ENCODE measurements at regions of chr16 and their contacts with region 1.

Region 1: DNA sequence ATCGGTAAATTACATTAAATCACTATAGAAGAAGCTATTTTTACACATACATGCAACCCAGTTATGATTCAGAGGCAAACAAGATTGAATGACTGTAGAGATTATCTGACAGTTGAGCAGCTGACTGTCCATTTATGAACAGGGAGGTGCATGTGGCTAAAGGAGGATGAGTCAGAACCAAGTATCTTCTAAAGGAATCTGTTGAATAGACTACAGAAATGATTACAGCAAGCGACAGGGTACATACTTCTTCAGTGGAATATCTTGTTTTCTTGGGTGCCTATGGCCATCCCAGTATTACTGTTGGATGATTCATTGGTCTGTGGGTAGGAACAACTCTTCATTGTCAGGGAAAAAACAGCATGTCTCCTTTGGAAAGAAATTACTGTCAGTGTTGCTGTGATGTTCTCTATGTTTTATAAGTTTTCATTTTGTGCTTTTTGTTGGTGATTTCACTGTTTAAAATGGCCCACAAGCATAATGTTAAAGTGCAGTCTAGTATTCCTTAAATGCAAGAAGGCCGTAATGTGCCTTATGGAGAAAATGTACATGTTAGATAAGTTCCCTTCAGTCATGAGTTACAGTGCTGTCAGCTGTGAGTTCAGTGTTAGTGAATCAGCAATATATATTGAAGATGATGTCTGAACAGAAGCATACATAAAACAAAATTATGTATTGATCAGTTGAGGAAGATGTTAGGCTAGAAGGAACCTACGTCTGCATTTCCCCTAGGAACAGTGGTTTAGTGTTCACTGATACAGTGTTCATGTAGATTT is 27.0 kb downstream of the CBFB start:
- DNase-seq: peak; percentile 34
- ATAC-seq: peak; percentile 89
- H3K4me3 Mint-ChIP-seq: peak overlapping the region; percentile 6
- H3K27ac Mint-ChIP-seq: peak overlapping the region; percentile 84
- H3K4me1 Mint-ChIP-seq: peaks cover 50% of the 10 kb centered on the region
- H3K27me3 Mint-ChIP-seq: no peaks in the 10 kb centered on the region

Region 2: GRCh38 chr16:66786551-66786950 is 269.3 kb before region 1 on chr16:
- CTCF ChIA-PET with region 1: no interaction called
- POLR2A ChIA-PET with region 1: no interaction called
- intact Hi-C with region 1: no loop called
- DNase-seq: no peak
- ATAC-seq: no peak
- H3K4me3 Mint-ChIP-seq: no peak overlapping the region
- H3K27ac Mint-ChIP-seq: no peak overlapping the region
- H3K4me1 Mint-ChIP-seq: no peaks in the 10 kb centered on the region
- H3K27me3 Mint-ChIP-seq: no peaks in the 10 kb centered on the region

Region 3: DNA sequence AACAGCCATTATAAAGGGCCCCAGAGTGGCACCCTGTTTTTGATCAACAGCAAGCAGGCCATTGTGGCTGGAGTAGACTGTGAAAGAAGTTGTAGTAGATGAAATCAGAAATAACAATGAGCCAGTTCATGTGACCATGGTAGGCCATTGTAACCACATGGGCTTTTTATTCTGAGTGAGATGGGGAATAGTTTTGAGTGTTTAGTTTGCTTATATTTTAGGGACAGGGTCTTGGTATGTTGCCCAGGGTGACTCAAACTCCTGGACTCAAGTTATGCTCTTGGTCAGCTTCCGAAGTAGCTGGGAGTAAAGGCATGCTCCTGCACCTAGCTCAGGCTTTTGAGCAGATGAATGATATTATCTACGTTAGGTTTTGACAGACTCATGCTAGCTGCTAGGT is 15.0 kb before region 1 on chr16:
- CTCF ChIA-PET with region 1: interaction called, 11 read pairs
- POLR2A ChIA-PET with region 1: no interaction called
- intact Hi-C with region 1: no loop called
- DNase-seq: no peak
- ATAC-seq: no peak
- H3K4me3 Mint-ChIP-seq: no peak overlapping the region
- H3K27ac Mint-ChIP-seq: peak overlapping the region; percentile 60
- H3K4me1 Mint-ChIP-seq: peaks cover 35% of the 10 kb centered on the region
- H3K27me3 Mint-ChIP-seq: no peaks in the 10 kb centered on the region

Region 4: DNA sequence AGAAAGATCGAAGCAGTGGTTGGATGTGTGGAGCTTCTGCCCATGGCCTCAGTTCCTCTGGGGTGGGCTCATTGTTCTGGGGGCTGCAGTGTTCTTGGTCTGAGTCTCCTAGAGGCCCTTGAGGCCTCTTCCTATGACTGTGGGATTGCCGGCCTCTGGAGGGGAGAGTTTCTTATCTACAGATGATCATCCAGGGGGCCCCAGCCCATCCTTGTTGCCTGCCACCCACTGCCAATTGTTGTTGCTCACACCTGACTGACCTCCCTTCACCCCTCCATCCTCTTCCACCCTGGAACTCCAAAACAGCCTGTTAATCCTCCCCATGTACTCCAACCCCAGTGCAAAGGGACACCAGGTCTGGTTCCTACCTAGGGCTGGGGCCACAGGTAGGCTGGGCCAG is 89.0 kb after region 1 on chr16:
- CTCF ChIA-PET with region 1: no interaction called
- POLR2A ChIA-PET with region 1: no interaction called
- intact Hi-C with region 1: no loop called
- DNase-seq: no peak
- ATAC-seq: no peak
- H3K4me3 Mint-ChIP-seq: no peak overlapping the region
- H3K27ac Mint-ChIP-seq: no peak overlapping the region
- H3K4me1 Mint-ChIP-seq: no peaks in the 10 kb centered on the region
- H3K27me3 Mint-ChIP-seq: peaks cover 3% of the 10 kb centered on the region

Region 5: DNA sequence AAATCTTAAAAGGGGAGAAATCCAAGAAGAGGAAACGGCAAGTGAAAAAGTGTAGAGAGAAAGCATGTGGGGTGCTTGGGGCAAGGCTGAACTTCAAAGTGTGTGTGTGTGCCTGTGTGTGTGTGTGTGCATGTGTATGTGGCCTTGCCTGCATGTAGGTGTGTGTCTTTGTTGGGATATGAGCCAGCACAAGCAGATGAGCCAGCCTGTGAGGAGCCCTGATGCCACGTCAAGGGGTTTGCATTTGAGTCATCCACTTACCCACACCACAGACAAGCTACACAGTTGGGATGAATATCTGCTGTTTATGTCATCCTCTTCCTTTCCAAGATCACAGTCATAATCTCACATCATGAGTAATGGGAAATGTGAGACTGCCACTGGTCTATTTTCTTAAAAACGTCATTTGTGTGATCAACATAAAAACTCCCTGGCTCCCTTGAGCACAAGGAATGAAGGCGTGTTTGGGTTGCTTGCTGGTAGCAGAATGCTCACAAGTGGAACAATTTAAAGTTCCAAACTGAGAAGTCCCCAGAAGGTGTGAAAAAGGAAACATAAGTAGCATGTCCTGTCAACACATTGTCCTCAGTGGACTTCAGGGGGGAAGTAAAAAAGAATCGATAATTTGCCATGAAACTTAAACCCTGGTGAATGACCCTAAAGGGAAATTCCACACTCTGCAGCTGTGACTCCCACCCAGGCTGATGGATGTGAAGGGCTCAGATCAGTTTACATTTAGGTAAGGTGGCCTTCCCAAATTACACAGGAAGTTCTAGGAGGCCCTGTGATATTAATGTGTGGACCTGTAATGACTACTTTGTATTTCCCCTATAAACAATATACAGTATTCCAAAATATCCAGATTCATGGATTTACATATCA is 255.9 kb after region 1 on chr16:
- CTCF ChIA-PET with region 1: no interaction called
- POLR2A ChIA-PET with region 1: no interaction called
- intact Hi-C with region 1: loop called in 1 of 2 experiments (anchors 1 kb)
- DNase-seq: peak; percentile 94
- ATAC-seq: peak; percentile 98
- H3K4me3 Mint-ChIP-seq: peak overlapping the region; percentile 1
- H3K27ac Mint-ChIP-seq: peak overlapping the region; percentile 98
- H3K4me1 Mint-ChIP-seq: peaks cover 40% of the 10 kb centered on the region
- H3K27me3 Mint-ChIP-seq: peaks cover 1% of the 10 kb centered on the region